CD4-positive, alpha-beta memory T cell (primary cell): ENCODE measurements at regions of chr20 and their contacts with region 1.

Region 1: GRCh38 chr20:50561379-50562078 is 51.3 kb downstream of the PTPN1 start:
- DNase-seq: no peak
- H3K4me3 ChIP-seq: no peak overlapping the region
- H3K4me3 Mint-ChIP-seq: peak overlapping the region in 4 of 8 donors; percentile 14 to 75 (median 52)
- H3K27ac ChIP-seq: no peak overlapping the region
- H3K27ac Mint-ChIP-seq: peak overlapping the region; percentile 54 to 85 (median 77)
- H3K4me1 ChIP-seq: peaks cover 50% of the 10 kb centered on the region
- H3K4me1 Mint-ChIP-seq: peaks cover 38 to 77% (median 60%) of the 10 kb centered on the region in 4 donors
- H3K27me3 ChIP-seq: no peaks in the 10 kb centered on the region
- H3K27me3 Mint-ChIP-seq: no peaks in the 10 kb centered on the region

Region 2: DNA sequence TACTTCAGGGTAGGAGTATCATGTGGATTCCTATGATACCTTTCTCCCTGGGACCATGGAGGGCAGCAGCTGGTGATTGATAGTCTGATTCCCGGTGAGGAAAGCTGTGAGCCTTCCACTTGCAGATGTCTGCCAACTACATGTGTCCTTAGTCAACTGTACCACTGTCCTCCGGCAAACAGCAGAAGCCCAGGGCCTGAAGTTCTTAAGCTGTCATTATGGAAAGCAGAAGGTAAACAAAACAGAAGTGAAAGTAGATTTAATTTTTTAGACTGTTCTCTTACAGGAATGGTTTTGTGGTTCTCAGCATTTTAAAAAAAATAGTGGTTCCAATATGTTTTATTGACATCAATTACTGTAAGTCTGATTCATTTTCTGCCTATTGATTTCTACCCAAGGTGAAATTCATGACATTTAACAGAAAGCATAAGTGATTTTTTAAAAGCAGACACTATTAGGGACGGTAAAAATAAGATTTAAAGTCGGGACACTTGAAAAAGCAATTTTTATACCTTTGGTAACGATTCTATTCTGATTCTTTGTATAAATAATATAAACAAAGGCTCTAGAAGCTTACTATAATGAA is 14.7 kb before region 1 on chr20:
- CTCF ChIA-PET with region 1: interaction called, 3 read pairs
- POLR2A ChIA-PET with region 1: interaction called, 3 read pairs
- intact Hi-C with region 1: loop called (anchors 2 kb)
- DNase-seq: peak in 1 of 5 donors; percentile 38
- H3K4me3 ChIP-seq: peak overlapping the region in 1 of 2 donors; percentile 26
- H3K4me3 Mint-ChIP-seq: peak overlapping the region; percentile 74 to 92 (median 82)
- H3K27ac ChIP-seq: peak overlapping the region; percentile 30
- H3K27ac Mint-ChIP-seq: peak overlapping the region; percentile 78 to 92 (median 89)
- H3K4me1 ChIP-seq: peaks cover 91% of the 10 kb centered on the region
- H3K4me1 Mint-ChIP-seq: peaks cover 62 to 70% (median 66%) of the 10 kb centered on the region in 4 donors
- H3K27me3 ChIP-seq: no peaks in the 10 kb centered on the region
- H3K27me3 Mint-ChIP-seq: no peaks in the 10 kb centered on the region

Region 3: DNA sequence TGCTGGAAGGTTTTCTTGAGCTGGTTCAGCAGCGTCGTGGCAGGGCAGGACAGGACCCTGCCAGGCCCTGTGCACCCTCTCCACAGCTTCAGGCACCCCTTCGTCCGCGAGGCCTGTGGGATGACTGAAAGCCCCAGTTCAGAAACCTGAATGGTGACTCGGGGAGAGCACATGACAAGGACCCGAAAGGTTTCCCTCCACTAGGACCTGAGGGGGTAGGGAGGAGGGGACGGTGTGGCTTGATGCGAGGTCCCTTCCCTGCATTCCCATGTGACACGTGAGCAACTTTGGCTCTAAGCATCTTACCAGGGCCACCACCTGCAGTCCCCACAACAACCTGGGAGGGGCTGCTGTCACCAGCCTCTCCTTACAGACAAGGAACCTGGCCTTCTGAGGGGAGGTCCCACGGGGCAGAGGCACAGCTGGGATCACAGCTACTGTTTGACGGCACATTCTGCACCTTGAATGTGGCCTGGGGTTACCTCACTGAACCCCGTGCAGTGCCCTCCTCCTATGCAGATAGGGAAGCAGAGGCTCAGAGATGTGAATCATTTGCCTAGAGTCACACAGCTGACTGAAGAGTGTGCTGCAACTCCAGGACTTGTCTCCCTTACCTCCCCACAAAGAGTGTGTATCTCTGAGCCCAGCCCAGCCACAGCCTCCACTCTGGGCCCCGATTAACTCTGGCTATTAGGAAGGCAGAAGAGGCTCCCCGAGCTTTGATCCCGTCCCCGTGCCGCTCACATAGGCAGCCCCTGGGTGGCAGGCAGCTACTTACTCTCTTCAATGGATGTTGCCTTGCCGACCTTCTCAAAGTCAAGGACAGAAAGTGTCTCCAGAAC is 33.3 kb after region 1 on chr20:
- CTCF ChIA-PET with region 1: no interaction called
- POLR2A ChIA-PET with region 1: no interaction called
- intact Hi-C with region 1: no loop called
- DNase-seq: peak in 1 of 5 donors; percentile 17
- H3K4me3 ChIP-seq: no peak overlapping the region
- H3K4me3 Mint-ChIP-seq: no peak overlapping the region
- H3K27ac ChIP-seq: no peak overlapping the region
- H3K27ac Mint-ChIP-seq: peak overlapping the region in 5 of 7 donors; percentile 30 to 75 (median 41)
- H3K4me1 ChIP-seq: no peaks in the 10 kb centered on the region
- H3K4me1 Mint-ChIP-seq: peaks cover 0 to 14% (median 3%) of the 10 kb centered on the region in 4 donors
- H3K27me3 ChIP-seq: no peaks in the 10 kb centered on the region
- H3K27me3 Mint-ChIP-seq: no peaks in the 10 kb centered on the region

Region 4: GRCh38 chr20:50834599-50835005 is 273.1 kb after region 1 on chr20:
- CTCF ChIA-PET with region 1: no interaction called
- POLR2A ChIA-PET with region 1: no interaction called
- intact Hi-C with region 1: no loop called
- DNase-seq: no peak
- H3K4me3 ChIP-seq: no peak overlapping the region
- H3K4me3 Mint-ChIP-seq: no peak overlapping the region
- H3K27ac ChIP-seq: no peak overlapping the region
- H3K27ac Mint-ChIP-seq: no peak overlapping the region
- H3K4me1 ChIP-seq: peaks cover 8% of the 10 kb centered on the region
- H3K4me1 Mint-ChIP-seq: peaks cover 0 to 5% (median 2%) of the 10 kb centered on the region in 4 donors
- H3K27me3 ChIP-seq: no peaks in the 10 kb centered on the region
- H3K27me3 Mint-ChIP-seq: no peaks in the 10 kb centered on the region